Mucosa of descending colon (tissue), 3 donors: ENCODE measurements at regions of chr20 and their contacts with region 1.

Region 1: DNA sequence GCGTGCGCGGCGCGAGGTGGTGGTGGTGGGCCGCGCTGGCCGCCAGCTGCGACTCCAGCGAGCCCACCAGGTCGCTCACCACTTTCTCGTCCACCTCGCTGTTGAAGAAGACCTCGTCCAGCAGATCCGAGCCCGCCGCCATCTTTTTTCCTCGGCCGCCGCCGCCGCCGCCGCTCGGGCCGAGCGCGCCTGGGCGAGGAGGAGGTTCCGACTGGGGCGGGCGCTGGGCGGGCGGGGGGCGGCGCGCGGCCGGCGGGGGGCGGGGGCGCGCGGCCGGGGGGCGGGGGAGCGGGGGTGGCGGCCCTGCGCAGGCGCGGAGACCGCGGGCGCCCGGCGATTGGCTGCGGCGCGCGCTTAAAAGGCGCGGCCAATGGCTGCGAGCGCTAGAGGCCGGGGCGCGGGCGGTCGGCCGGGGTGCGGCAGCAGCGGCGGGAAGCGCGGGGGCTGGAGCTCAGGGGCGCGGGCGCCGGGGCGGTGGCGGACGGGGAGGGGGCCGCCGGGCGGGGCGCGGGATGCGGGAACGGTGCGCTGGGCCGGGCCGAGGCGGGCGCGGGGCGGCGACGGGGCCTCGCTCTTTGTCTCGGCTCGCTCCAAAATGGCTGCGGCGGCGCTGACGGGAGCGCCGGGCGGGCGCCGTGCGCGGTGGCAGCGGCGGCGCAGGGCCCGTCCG is at the start of gene TAF4:
- DNase-seq: peak; percentile 80 to 89 (median 86)
- ATAC-seq: peak; percentile 65
- H3K4me3 ChIP-seq: peak within 1 kb of the TSS; percentile 44
- H3K4me1 ChIP-seq: peaks cover 46% of the 10 kb centered on the region
- CTCF ChIP-seq: no peak
- total RNA-seq, gene TAF4: 23.8 to 28.3 (median 27.5) TPM

Region 2: DNA sequence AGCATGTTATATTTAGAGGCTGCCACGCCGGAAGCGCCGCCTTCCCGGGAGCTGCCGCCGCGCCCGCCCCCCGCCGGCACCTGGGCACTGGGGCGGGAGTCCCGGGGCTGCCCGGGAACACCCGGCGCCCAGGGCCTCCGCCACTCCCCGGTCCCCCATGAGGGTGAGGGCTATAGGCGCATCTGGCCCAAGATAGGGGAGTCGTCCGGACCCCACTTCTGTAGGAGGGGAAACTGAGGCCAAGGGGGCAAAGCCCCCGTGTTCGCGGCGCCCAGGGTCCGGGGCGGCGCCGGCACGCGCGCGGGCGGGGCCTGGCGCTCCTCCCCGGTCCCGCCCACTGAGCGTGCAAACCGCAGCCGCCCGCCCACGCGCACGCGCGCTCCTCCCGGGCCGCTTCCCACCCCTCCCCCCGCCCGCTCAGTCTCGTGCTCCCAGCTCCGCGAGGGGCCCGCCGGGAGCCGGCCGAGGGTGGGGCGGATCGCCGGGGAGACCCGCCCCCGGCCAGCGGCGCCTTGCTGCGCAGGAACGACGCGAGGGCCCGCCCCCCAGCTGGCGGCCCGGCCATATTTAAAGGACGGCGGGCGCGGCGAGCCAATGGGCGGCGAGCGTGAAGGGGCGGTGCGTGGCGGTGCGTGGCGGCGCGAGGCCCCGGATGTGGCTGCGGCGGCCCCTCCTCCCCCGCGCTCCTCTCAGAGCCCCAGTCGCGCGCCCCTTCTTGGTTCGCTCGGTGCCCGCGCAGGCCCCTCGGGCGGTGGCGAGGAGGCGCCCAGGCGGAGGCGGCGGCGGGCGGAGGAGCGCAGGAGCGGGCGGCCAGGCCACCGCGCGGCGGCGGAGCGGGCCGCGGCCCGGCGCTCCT is 56.2 kb after region 1 on chr20 and contains the start of gene LSM14B:
- intact Hi-C with region 1: loop called in 1 of 2 experiments (anchors 5 kb)
- DNase-seq: peak; percentile 94 to 98 (median 98)
- ATAC-seq: peak; percentile 91
- H3K4me3 ChIP-seq: peak within 1 kb of the TSS; percentile 70
- H3K4me1 ChIP-seq: peaks cover 11% of the 10 kb centered on the region
- CTCF ChIP-seq: no peak
- total RNA-seq, gene LSM14B: 33.5 to 49.1 (median 36.1) TPM

Region 3: DNA sequence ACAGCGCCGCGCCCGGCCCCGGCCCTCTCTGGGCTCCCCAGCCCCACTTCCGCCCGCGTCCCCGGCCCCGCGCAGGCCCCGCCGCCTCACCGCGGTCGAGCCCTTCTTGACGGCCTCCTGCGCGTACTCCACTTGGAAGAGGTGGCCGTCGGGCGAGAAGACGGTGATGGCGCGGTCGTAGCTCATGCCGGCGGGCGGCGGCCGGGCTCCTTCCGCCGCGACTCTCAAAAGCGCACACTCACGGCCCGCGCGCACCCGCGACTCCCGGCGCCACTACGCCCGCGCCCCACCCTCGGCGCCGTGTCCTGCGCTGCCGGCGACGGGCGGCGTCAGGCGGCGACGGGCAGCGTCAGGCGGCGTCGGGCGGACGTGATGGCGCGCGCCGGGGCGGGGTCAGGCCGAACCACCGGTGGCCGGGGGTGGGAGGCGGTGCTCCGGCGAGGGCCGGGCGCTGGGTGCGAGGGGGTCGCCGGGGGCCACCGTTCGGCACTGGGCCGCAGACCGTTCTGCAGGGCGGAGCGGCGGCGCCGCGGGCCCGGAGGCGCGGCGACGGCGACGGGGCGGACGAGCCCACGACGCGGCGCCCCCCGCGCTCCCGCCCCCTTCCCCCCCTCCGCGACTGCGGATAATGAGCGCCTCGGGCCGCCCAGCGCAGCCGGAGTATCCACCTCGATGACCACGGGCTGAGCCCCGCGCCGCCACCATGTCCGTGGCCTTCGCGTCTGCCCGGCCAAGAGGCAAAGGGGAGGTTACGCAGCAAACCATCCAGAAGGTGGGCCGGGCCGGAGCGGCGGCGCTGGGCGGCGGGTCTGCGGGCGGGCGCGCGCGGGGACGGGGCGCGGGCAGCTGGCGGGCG is 77.5 kb after region 1 on chr20 and contains the starts of genes PSMA7 and SS18L1:
- intact Hi-C with region 1: loop called in 1 of 2 experiments (anchors 5 kb)
- DNase-seq: peak; percentile 85 to 92 (median 92)
- ATAC-seq: peak; percentile 94
- H3K4me3 ChIP-seq: peak within 1 kb of the TSS; percentile 95
- H3K4me1 ChIP-seq: peaks cover 20% of the 10 kb centered on the region
- CTCF ChIP-seq: no peak
- total RNA-seq, gene PSMA7: 129 to 197 (median 194) TPM
- total RNA-seq, gene SS18L1: 13.2 to 16.0 (median 14.4) TPM

Region 4: DNA sequence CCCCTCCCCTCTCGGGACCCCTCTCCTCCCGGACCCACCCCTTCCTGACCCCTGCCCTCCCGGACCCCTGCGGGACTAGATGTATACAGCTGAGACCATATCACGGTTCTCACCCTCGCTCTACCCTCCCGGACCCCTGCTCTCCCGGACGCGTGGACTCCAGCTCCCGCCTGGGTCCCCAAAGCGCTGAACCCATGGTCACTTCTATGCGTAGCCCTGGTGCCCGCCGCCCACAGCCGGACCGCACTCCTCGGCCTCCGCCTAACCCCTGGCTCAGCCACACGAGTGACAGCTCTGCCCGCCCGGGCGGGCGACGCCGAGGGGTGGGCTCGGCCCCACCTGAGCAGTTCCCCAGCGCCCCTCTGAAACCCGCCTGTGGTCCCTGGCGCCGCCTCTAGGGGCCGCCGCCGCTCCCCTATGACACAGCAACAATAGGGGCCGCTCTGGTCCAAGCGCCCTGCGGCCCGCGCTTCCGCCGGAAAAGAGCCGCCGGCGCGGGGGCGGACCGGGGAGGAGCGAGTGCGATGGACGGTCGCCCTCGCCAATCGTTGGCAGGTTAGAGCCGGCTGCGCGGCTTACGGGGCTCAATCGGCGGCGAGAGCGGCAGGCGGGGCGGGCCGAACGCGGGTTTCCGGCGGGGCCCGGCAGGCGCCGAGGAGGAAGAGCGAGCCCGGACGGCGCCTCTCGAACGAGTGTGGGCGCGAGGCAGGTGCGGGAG is 236.7 kb after region 1 on chr20 and contains the start of gene ADRM1:
- intact Hi-C with region 1: no loop called
- DNase-seq: peak; percentile 95 to 98 (median 97)
- ATAC-seq: peak; percentile 91
- H3K4me3 ChIP-seq: peak within 1 kb of the TSS; percentile 94
- H3K4me1 ChIP-seq: peaks cover 18% of the 10 kb centered on the region
- CTCF ChIP-seq: peak; percentile 94
- total RNA-seq, gene ADRM1: 54.4 to 85.8 (median 77.6) TPM